Left ventricle myocardium superior (tissue), 1 donor: ENCODE measurements at regions of chr2 and their contacts with region 1.

Region 1: GRCh38 chr2:204177977-204178540 is 241.5 kb downstream of the ICOS start:
- DNase-seq: peak; percentile 77
- ATAC-seq: peak; percentile 69

Region 2: DNA sequence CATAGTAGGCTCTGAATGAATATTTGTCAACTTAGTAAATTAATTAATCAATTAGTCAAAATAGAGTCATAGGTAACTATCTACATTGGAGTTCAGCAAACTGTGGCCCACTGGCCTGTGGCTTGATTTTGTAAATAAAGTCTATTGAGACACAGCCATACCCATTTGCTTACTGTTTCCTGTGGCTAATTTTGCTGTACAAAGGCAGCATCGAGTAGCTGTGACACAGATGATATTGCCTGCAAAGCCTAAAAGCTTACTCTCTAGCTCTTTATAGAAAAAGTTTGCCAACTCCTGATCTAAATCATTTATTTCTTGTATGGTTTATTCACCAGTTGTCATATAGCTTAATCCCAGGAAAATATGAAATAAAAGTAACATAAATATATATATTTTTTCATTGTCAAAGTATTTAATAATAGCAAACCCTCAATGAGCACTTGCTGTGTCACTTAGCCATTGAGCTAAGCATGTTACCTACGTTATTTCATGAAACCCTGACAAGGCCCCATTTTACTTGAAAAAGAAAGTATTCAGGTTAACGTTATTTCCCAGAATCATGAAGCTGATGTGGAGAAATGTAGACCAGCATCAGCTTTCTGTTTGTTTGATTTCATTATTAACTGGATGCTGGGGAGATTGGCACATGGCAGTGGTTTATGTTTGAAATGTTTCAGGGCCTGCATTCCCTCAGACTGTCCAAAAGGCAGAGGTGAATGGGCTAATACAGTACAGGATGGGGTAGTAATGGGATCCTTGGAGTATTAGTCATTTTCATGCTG is 171.9 kb before region 1 on chr2:
- intact Hi-C with region 1: no loop called
- DNase-seq: no peak
- ATAC-seq: no peak

Region 3: GRCh38 chr2:204108330-204108751 is 69.7 kb before region 1 on chr2:
- intact Hi-C with region 1: loop called (anchors 5 kb)
- DNase-seq: no peak
- ATAC-seq: peak; percentile 69

Region 4: DNA sequence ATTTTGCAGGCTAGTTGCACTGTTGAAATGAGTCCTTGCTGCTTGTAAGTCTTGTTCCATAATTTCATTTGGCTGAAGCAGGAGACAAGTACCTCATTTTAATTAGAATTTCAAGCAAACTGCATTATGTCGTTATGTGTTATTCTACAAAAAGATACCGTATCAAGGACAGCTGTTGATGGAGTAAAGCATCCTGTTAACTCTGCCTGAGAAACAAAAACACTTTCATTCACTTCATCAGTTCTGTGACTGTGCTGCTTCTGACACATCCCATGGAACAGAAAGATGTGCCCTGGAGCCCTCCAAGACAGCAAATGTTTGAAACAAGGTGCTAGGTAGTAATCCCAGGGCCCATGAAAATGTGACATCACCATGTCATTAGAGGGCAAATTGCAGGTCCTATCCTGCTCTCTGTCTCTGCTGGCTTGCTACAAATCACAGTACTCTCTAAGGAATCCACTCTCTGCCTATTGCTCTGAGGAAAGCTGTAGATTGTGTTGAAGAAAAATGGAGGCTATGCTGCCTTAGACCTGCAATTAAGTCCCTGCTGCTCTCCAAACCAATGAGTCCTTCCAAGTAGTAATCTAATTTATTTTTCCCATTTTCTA is 157.5 kb after region 1 on chr2:
- intact Hi-C with region 1: no loop called
- DNase-seq: no peak
- ATAC-seq: no peak